BJ (cell line): ENCODE measurements at regions of chr17 and their contacts with region 1.

Region 1: GRCh38 chr17:40854159-40854814 is 12.7 kb downstream of the KRT12 start:
- DNase-seq: peak; percentile 87
- H3K4me3 ChIP-seq: no peak overlapping the region
- H3K27me3 ChIP-seq: no peaks in the 10 kb centered on the region
- CTCF ChIP-seq: no peak

Region 2: DNA sequence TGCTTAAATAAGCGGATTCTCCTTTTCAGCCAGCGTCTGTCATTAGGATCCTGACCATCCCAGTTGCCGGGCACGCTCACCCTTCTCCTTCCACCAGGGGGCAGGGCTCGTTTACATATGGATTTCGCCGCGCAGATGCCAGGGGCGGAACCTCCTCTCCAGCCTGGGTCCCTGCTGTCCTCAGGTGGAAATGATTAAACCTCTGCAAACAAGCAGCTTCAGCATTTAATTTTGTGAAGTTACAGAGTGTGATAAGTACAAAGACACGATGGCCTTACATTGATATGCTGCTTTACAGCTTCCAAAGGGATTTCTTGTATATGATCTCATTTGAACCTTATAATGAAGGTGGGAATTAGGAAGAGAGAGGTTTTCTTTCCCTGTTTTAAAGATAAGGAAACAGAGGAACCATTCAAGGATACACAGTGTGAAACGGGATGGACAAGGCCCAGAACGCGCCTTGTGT is 50.6 kb before region 1 on chr17:
- CTCF ChIA-PET with region 1: interaction called, 37 read pairs
- POLR2A ChIA-PET with region 1: no interaction called
- DNase-seq: no peak
- H3K4me3 ChIP-seq: no peak overlapping the region
- H3K27me3 ChIP-seq: peaks cover 11% of the 10 kb centered on the region
- CTCF ChIP-seq: peak; percentile 90

Region 3: DNA sequence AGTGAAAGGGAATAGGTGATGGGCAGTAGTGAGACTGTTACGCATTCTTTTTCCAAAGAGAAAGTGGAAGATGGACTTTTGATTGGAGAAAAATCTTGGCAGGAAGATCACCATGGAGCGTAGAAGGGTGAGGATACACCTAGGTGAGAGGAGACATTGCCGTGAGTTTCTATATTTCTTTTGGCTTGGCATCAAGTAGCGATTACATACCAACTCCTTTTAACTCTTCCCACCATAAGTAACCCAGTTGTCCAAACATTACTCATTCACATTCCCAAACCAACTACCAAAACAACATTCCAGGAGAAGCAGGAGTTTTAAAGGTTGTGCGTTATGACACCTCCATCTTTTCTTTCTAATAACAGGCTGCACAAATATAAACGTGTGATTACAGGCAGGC is 43.8 kb before region 1 on chr17:
- CTCF ChIA-PET with region 1: interaction called, 37 read pairs
- POLR2A ChIA-PET with region 1: no interaction called
- DNase-seq: no peak
- H3K4me3 ChIP-seq: no peak overlapping the region
- H3K27me3 ChIP-seq: no peaks in the 10 kb centered on the region
- CTCF ChIP-seq: no peak

Region 4: GRCh38 chr17:40909351-40909750 is 55.1 kb after region 1 on chr17:
- CTCF ChIA-PET with region 1: interaction called, 23 read pairs
- POLR2A ChIA-PET with region 1: no interaction called
- DNase-seq: peak; percentile 83
- H3K4me3 ChIP-seq: no peak overlapping the region
- H3K27me3 ChIP-seq: no peaks in the 10 kb centered on the region
- CTCF ChIP-seq: peak; percentile 75

Region 5: DNA sequence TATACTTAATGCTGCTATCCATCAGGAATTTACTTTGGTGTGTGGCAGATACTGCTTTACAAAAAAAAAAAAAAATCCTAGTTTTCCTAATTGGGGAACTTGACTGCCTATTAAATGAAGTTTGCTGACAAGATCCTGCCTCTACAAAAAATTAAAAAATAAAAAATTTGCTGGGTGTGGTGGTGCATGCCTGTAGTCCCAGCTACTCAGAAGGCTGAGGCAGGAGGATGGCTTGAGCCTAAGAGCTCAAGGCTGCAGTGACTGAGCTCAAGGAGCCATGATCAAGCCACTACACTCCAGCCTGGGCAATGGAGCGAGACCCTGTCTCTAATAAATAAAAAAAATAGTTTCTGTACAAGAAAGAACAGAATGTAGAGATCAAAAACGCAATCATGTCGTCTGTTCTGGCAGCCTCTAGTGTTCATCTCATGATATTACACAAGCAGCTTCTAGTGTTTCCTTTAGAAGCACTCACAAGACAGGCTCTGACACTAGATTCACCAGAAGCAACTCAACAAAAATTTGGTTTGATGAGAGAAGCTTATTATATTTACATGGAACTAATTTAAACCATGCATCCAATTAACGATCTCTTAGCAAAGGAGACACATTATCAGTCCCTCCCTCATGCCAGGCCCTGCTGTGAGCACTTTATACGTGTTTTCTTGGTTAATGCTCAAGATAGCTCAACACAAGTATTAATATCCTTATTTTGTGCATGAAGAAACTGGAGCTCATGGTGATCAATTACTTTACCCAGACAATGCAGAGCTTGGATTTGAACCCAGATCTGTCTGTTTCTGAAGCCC is 468.0 kb after region 1 on chr17:
- CTCF ChIA-PET with region 1: interaction called, 21 read pairs
- POLR2A ChIA-PET with region 1: no interaction called
- DNase-seq: peak; percentile 38
- H3K4me3 ChIP-seq: no peak overlapping the region
- H3K27me3 ChIP-seq: no peaks in the 10 kb centered on the region
- CTCF ChIP-seq: peak; percentile 91

Region 6: DNA sequence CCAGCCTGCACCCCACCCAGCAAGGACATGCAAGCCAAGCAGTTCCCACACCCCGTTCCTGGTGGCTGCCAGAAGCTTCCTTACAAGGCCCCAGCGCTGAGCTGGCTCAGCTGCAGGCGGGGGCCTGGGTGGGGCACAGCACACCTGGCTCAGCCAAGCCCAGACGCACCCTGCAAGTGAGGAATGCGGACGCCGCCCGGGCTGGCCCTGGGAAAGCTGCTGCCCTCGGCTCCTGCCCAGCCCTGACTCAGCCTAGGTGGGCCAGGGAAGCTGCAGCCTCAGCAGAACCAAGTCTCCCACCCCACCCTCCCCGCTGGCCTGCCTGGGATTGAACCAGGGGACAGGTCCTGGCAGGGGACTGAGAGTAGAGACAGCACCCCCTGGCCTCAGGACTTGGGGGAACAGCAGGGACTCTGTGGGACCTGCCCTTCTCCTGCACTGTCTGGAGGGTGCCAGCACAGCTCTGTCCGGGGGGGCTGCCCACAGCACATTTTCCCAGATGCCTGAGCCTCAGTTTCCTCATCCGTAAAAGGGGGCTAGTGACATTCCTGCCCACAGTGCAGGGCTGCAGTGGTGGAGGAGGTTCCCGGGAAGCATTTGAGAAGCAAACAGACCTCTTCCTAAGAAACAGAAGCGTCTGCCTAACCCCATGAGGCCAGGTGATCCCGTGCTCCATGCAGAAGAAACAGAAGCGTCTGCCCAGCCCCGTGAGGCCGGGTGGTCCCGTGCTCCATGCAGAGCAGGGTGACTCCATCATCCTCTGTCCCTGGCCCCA is 800.0 kb after region 1 on chr17:
- CTCF ChIA-PET with region 1: interaction called, 217 read pairs
- POLR2A ChIA-PET with region 1: no interaction called
- DNase-seq: no peak
- H3K4me3 ChIP-seq: no peak overlapping the region
- H3K27me3 ChIP-seq: no peaks in the 10 kb centered on the region
- CTCF ChIP-seq: no peak